Endothelial cell of umbilical vein (primary cell): ENCODE measurements at regions of chr18 and their contacts with region 1.

Region 1: DNA sequence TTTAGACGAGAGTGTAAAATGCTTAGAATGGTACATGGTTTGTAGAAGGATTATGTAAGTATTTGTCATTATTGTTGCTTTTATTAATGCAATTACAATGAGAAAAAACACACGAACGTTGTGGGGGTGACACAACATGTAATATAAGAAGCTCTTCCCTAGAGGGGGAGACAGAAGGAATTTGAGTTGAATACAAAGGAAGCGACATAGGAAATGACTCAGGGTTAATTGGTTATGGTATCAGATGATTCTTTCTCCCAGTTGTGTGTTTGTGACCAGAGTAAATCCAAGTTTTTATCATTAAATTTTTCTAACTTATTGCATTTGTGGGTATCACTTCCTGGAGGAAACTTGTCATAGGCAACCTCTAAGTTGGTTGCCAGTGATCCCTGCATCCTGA is 625.6 kb upstream of the CDH2 start:
- DNase-seq: peak; percentile 92
- H3K4me3 ChIP-seq: peak overlapping the region in 1 of 3 experiments; percentile 17
- H3K27ac ChIP-seq: peak overlapping the region; percentile 78
- H3K4me1 ChIP-seq: peaks cover 40% of the 10 kb centered on the region
- H3K27me3 ChIP-seq: no peaks in the 10 kb centered on the region
- CTCF ChIP-seq: no peak
- POLR2A ChIP-seq: peak; percentile 19

Region 2: GRCh38 chr18:28003451-28003850 is 799.1 kb before region 1 on chr18:
- CTCF ChIA-PET with region 1: no interaction called
- POLR2A ChIA-PET with region 1: no interaction called
- dilution Hi-C with region 1: no loop called
- intact Hi-C with region 1: loop called (anchors 1 kb)
- DNase-seq: peak; percentile 83
- H3K4me3 ChIP-seq: no peak overlapping the region
- H3K27ac ChIP-seq: peak overlapping the region; percentile 70
- H3K4me1 ChIP-seq: peaks cover 31% of the 10 kb centered on the region
- H3K27me3 ChIP-seq: no peaks in the 10 kb centered on the region
- CTCF ChIP-seq: no peak
- POLR2A ChIP-seq: no peak

Region 3: GRCh38 chr18:28204154-28204553 is 598.4 kb before region 1 on chr18:
- CTCF ChIA-PET with region 1: no interaction called
- POLR2A ChIA-PET with region 1: no interaction called
- dilution Hi-C with region 1: no loop called
- intact Hi-C with region 1: loop called (anchors 1 kb)
- DNase-seq: peak; percentile 83
- H3K4me3 ChIP-seq: no peak overlapping the region
- H3K27ac ChIP-seq: peak overlapping the region; percentile 93
- H3K4me1 ChIP-seq: peaks cover 16% of the 10 kb centered on the region
- H3K27me3 ChIP-seq: no peaks in the 10 kb centered on the region
- CTCF ChIP-seq: no peak
- POLR2A ChIP-seq: no peak

Region 4: DNA sequence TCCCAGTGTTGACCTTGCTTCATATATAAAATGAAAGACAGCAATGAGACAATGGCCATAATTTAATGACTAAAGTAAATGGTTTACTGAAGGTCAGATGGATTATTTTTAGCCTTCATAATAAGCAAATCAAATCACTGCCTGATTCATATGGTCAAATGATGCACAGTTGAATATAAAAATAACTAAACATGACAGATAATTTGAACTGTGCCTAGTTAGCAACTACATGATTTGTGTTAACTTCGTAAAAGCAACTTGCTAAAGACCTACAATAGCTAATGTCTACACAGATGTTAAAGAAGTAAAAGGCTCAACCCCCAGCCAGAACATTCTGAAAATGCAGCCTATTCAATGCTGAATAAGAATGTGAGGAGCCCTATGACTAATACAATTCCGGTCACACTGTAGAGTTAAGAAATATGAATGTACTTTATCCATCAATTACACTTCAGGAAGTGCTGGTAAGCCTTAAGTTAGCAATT is 34.8 kb before region 1 on chr18:
- CTCF ChIA-PET with region 1: no interaction called
- POLR2A ChIA-PET with region 1: no interaction called
- dilution Hi-C with region 1: no loop called
- intact Hi-C with region 1: loop called (anchors 2 kb)
- DNase-seq: peak; percentile 75
- H3K4me3 ChIP-seq: no peak overlapping the region
- H3K27ac ChIP-seq: peak overlapping the region; percentile 65
- H3K4me1 ChIP-seq: peaks cover 33% of the 10 kb centered on the region
- H3K27me3 ChIP-seq: no peaks in the 10 kb centered on the region
- CTCF ChIP-seq: no peak
- POLR2A ChIP-seq: no peak

Region 5: DNA sequence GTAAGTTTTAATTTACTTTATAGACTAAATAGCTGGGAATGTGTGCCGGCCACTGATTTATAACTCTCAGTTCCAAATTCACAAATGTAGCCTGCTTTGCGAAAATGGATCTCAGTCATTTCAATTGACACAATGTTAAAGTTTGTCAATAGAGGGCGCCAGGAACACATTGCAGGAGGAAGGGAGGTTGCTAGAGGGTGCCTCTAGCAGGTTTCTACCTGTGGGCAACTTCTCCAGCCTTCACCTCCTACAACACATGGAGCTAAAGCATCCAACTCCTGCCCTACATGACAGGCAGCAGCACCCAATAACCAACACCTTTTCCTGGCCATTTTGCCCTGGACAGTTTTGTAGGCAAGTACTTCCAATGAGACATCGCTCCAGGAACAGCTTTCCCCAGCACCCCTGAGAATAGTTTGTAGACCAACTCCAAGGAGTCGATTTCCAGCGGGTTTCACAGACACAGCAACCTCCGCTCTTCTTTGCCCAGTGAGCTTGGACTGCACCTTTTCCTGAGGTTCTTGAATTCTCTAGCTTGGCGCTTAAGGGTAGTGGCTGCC is 159.2 kb after region 1 on chr18:
- CTCF ChIA-PET with region 1: no interaction called
- POLR2A ChIA-PET with region 1: no interaction called
- dilution Hi-C with region 1: no loop called
- intact Hi-C with region 1: loop called (anchors 5 kb)
- DNase-seq: peak; percentile 43
- H3K4me3 ChIP-seq: no peak overlapping the region
- H3K27ac ChIP-seq: no peak overlapping the region
- H3K4me1 ChIP-seq: peaks cover 8% of the 10 kb centered on the region
- H3K27me3 ChIP-seq: no peaks in the 10 kb centered on the region
- CTCF ChIP-seq: peak; percentile 50 to 51
- POLR2A ChIP-seq: no peak

Region 6: GRCh38 chr18:29164020-29164706 is 361.6 kb after region 1 on chr18:
- CTCF ChIA-PET with region 1: no interaction called
- POLR2A ChIA-PET with region 1: no interaction called
- dilution Hi-C with region 1: no loop called
- intact Hi-C with region 1: loop called (anchors 1 kb)
- DNase-seq: peak; percentile 91
- H3K4me3 ChIP-seq: peak overlapping the region in 1 of 3 experiments; percentile 27
- H3K27ac ChIP-seq: peak overlapping the region; percentile 100
- H3K4me1 ChIP-seq: peaks cover 53% of the 10 kb centered on the region
- H3K27me3 ChIP-seq: no peaks in the 10 kb centered on the region
- CTCF ChIP-seq: no peak
- POLR2A ChIP-seq: peak; percentile 62

Region 7: GRCh38 chr18:29226201-29226600 is 423.7 kb after region 1 on chr18:
- CTCF ChIA-PET with region 1: no interaction called
- POLR2A ChIA-PET with region 1: no interaction called
- dilution Hi-C with region 1: no loop called
- intact Hi-C with region 1: no loop called
- DNase-seq: no peak
- H3K4me3 ChIP-seq: no peak overlapping the region
- H3K27ac ChIP-seq: no peak overlapping the region
- H3K4me1 ChIP-seq: no peaks in the 10 kb centered on the region
- H3K27me3 ChIP-seq: no peaks in the 10 kb centered on the region
- CTCF ChIP-seq: no peak
- POLR2A ChIP-seq: no peak